ENCODE measurements at regions of chr5 and their contacts with region 1.

Region 1: GRCh38 chr5:170486371-170486770 is 17.4 kb upstream of the KCNIP1 start:
- DNase-seq: no peak
- H3K4me3 ChIP-seq: no peak overlapping the region
- H3K27ac ChIP-seq: no peak overlapping the region
- H3K27me3 ChIP-seq: no peaks in the 10 kb centered on the region
- CTCF ChIP-seq: no peak

Region 2: DNA sequence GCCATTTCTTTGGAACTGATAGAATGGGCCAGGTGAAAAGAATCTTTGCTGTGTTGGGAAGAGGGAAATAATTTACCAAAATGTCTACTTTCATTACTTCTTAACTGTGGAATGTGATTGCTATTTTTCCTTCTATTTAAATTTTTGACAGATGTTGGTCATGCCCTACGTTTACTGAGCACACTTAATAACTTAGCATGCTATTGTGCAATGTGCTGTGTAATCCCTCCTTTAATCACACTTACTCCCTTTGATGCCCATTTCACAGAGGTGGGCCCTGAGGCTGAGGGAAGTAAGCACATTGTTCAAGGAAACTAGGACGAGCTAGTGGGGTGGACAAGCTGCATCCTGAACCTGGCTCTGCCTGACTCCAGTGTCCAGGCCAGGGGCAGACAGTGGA is 458.2 kb before region 1 on chr5:
- CTCF ChIA-PET with region 1: no interaction called
- POLR2A ChIA-PET with region 1: no interaction called
- DNase-seq: no peak
- H3K4me3 ChIP-seq: no peak overlapping the region
- H3K27ac ChIP-seq: no peak overlapping the region
- H3K27me3 ChIP-seq: peaks cover 2% of the 10 kb centered on the region
- CTCF ChIP-seq: no peak

Region 3: GRCh38 chr5:170183816-170184687 is 302.3 kb before region 1 on chr5:
- CTCF ChIA-PET with region 1: no interaction called
- POLR2A ChIA-PET with region 1: no interaction called
- DNase-seq: no peak
- H3K4me3 ChIP-seq: no peak overlapping the region
- H3K27ac ChIP-seq: no peak overlapping the region
- H3K27me3 ChIP-seq: no peaks in the 10 kb centered on the region
- CTCF ChIP-seq: peak; percentile 81

Region 4: DNA sequence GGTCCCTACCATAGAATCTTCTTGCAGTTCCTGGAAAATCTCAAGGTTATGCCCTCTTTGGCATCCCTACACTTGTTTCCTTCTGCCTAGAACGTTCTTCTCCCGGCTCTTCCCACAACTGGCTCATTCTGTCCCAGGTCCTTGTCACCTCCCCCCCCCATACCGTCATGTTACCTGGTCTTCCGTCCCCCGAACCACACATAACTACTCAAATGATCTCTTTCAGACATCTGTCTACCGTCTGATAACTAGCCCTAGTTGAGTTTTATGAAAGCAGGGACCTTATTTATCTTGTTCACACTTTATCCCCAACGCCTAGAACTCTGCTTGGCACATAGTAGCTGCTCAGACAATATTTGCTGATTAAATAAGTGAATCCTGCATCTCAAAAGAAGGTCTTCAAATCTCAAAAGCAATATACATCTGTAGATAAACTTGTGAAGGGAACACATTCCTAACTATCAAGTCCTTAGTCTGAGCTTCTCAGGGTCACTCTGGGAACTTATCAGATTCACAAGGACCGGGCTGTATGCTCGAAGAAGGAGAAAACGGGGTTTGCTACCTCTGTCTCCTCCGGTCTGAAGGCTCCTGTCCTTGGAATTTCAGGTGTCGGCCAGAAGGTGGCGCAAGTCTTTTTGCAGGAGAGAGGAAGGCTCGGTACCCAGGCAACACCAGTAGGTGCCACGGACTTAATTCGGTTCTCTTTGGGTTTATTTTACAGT is 218.8 kb before region 1 on chr5:
- CTCF ChIA-PET with region 1: interaction called, 10 read pairs
- POLR2A ChIA-PET with region 1: no interaction called
- DNase-seq: peak; percentile 27
- H3K4me3 ChIP-seq: no peak overlapping the region
- H3K27ac ChIP-seq: no peak overlapping the region
- H3K27me3 ChIP-seq: peaks cover 14% of the 10 kb centered on the region
- CTCF ChIP-seq: peak; percentile 83

Region 5: DNA sequence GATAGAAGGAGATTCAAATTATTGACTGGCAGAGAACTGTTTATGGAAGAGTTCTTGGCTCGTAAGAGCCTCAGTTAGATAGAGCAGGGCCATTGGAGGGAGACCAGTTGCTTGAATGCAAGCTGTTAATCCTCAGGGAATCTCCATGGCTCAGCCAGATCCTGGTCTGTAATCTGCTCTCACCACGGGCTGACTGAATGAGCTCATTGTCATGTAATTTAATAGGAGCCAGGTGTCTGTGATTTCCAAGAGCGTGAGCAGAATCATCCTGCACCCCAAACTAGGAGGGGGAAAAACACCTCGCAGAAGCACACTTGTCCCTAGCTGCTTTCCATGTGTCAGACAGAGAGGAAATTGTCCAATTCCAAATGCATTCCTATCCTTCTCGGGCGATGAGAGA is 78.1 kb before region 1 on chr5:
- CTCF ChIA-PET with region 1: no interaction called
- POLR2A ChIA-PET with region 1: no interaction called
- DNase-seq: no peak
- H3K4me3 ChIP-seq: no peak overlapping the region
- H3K27ac ChIP-seq: no peak overlapping the region
- H3K27me3 ChIP-seq: no peaks in the 10 kb centered on the region
- CTCF ChIP-seq: no peak

Region 6: GRCh38 chr5:170861837-170862766 is 375.7 kb after region 1 on chr5 and contains the start of gene RANBP17:
- CTCF ChIA-PET with region 1: no interaction called
- POLR2A ChIA-PET with region 1: no interaction called
- DNase-seq: no peak
- H3K4me3 ChIP-seq: peak within 1 kb of the TSS; percentile 69
- H3K27ac ChIP-seq: peak within 1 kb of the TSS; percentile 59
- H3K27me3 ChIP-seq: no peaks in the 10 kb centered on the region
- CTCF ChIP-seq: no peak
- polyA plus RNA-seq, gene RANBP17: 11.6 and 12.9 TPM in 2 replicates

Measured in AG04450 (cell line).